Colonic mucosa (tissue), 4 donors: ENCODE measurements at regions of chr2 and their contacts with region 1.

Region 1: DNA sequence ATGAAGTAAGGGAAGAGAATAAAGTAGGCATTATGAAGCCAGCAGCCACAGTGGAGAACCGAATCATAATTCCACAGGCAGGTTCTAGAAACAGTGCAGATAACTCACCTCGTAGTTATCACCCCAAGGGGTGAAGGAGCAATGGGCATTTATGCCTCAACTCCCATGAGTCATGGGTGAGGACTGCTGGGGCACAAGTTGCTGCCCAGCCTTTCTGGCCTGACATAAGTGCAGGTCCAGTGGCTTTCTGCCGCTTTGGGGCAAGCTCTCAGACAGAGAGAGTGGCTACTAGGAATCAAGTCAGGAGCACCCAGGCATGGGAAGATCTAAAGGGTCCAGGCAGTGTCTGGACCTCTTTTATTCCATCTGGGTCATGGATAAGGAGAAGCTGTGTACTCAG is 149.8 kb downstream of the SUCLG1 start:
- DNase-seq: no peak
- H3K4me3 ChIP-seq: no peak overlapping the region
- H3K27ac ChIP-seq: no peak overlapping the region
- H3K4me1 ChIP-seq: no peaks in the 10 kb centered on the region
- H3K27me3 ChIP-seq: no peaks in the 10 kb centered on the region
- CTCF ChIP-seq: no peak

Region 2: GRCh38 chr2:84022810-84023431 is 286.4 kb before region 1 on chr2:
- intact Hi-C with region 1: loop called (anchors 2 kb)
- DNase-seq: peak; percentile 55
- H3K4me3 ChIP-seq: no peak overlapping the region
- H3K27ac ChIP-seq: no peak overlapping the region
- H3K4me1 ChIP-seq: no peaks in the 10 kb centered on the region
- H3K27me3 ChIP-seq: no peaks in the 10 kb centered on the region
- CTCF ChIP-seq: peak; percentile 68

Region 3: GRCh38 chr2:84055816-84056215 is 253.5 kb before region 1 on chr2:
- intact Hi-C with region 1: no loop called
- DNase-seq: no peak
- H3K4me3 ChIP-seq: no peak overlapping the region
- H3K27ac ChIP-seq: no peak overlapping the region
- H3K4me1 ChIP-seq: no peaks in the 10 kb centered on the region
- H3K27me3 ChIP-seq: no peaks in the 10 kb centered on the region
- CTCF ChIP-seq: no peak